ENCODE measurements at regions of chr19 and their contacts with region 1.

Region 1: DNA sequence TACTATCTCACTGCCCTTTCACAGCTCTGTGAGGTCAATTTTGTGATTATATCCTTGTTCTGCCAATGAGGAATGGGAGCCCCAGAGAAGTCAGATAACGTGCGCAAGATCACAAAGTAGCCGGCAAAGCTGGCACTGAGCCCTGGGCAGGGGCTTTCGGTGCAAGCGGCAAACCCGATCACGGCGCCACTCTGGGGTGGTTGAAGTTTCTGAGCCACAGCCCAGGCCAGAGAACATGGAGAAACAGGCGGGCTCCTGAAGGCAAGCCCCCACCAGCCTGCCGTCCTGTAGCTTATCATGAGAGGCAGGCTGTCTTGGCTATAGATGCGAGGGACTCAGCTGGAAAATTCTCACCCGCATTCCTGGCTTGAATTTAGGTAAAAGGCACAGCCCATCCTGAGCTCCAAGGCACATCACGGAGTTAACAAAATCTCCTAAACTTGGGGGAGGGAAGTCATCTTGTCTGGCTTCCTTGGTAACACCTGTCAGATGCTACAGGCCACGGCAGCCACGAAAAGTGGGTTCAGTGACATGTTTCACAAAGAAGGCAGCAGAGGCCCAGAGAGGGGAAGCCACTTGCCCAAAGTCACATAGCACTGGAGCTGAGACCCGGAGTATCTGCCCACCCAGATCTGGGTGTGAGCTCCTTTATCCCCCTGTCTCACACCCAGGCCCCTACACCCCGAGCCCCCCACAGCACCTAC is 12.5 kb downstream of the TNNT1 start:
- DNase-seq: no peak
- ATAC-seq: no peak
- H3K4me3 ChIP-seq: no peak overlapping the region
- H3K27ac ChIP-seq: no peak overlapping the region
- H3K4me1 ChIP-seq: peaks cover 6% of the 10 kb centered on the region
- H3K27me3 ChIP-seq: peaks cover 0 to 17% of the 10 kb centered on the region in 2 donors
- CTCF ChIP-seq: no peak
- POLR2A ChIP-seq: no peak

Region 2: DNA sequence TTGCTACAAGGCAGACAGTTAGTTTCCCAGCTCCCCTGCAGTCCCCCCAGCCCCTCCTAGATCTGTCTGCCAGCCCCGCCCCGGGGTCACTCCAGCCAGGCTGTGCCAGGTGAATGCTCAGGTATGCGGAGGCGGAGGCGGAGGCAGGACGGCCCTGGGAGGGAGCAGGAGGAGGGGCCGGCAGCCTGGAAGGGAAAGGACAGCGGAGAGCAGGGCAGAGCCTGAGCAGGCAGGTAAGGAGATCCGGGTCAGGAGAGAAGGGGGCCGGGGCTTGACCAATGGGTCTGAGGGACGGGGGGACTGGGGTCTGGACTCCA is 60.9 kb before region 1 on chr19 and contains the start of gene EPS8L1:
- intact Hi-C with region 1: no loop called
- DNase-seq: peak; percentile 64 to 80 (median 78)
- ATAC-seq: peak; percentile 87
- H3K4me3 ChIP-seq: no peak within 1 kb of the TSS
- H3K27ac ChIP-seq: peak within 1 kb of the TSS; percentile 57 to 74 (median 70)
- H3K4me1 ChIP-seq: peaks cover 22% of the 10 kb centered on the region
- H3K27me3 ChIP-seq: peaks cover 0 to 5% of the 10 kb centered on the region in 2 donors
- CTCF ChIP-seq: no peak
- POLR2A ChIP-seq: peak; percentile 15 to 75 (median 72)
- total RNA-seq, gene EPS8L1: 22.1 to 23.3 TPM

Region 3: DNA sequence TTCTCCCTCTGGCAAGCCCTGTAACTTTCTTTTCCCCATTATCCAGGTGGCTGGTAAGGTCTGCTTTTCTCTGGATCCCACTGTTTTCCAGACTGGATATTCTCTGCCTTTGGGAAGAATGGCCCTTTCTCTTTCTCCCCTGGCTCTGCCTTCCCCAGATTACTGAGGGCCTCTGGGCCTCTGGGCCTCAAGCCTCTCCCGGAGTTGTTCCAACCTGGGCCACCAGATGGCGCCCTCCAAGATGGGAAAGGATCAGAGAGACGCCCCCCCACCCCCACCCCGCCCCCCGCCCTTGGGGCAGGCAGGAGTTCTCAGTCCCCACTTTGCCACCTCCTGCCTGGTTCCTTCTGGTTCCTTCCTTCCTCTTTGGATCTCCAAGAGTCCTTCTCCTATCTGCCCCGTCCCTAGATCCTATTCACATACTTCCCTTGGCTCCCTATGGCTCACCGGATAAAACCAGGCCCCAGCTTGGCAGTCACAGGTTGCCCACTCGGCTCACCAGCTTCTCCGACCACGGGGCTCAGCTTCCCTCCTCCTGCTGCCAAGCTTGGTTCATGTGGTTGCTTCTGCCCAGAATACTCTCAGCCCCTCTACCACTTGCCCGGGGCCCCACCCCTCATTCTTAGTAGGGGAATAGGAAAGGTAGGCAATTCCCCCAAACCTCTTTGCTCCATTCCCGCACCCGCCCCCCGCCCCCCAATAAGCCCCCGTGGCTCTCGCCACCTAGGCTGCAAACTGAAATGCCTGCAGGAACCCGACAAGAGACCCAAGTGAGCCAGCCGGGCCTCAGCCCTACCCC is 47.8 kb before region 1 on chr19:
- intact Hi-C with region 1: no loop called
- DNase-seq: peak; percentile 69 to 82 (median 74)
- ATAC-seq: peak; percentile 51
- H3K4me3 ChIP-seq: no peak overlapping the region
- H3K27ac ChIP-seq: peak overlapping the region in 1 of 4 donors; percentile 29
- H3K4me1 ChIP-seq: peaks cover 23% of the 10 kb centered on the region
- H3K27me3 ChIP-seq: no peaks in the 10 kb centered on the region
- CTCF ChIP-seq: peak; percentile 43 to 80 (median 48)
- POLR2A ChIP-seq: no peak

Region 4: DNA sequence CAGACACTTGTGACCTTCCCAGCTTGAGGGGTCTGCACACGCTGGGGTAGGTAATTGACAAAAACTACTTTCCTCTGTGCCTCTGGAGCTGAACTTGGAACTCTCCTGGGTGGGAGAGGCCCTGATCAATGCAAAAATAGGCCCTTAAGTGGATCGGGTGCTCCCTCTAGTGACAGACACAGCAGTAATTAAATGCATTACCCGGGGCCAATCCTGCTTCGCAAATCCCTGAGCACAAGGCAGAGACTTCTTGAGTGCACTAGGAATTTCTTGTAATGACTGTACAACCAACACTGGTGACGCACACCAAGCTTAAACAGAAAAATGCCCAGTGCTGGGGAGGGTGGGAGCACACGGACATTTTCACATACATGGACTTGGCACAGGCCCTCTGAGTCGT is 281.6 kb after region 1 on chr19:
- intact Hi-C with region 1: loop called (anchors 5 kb)
- DNase-seq: peak; percentile 59 to 75 (median 67)
- ATAC-seq: peak; percentile 82
- H3K4me3 ChIP-seq: no peak overlapping the region
- H3K27ac ChIP-seq: no peak overlapping the region
- H3K4me1 ChIP-seq: no peaks in the 10 kb centered on the region
- H3K27me3 ChIP-seq: no peaks in the 10 kb centered on the region
- CTCF ChIP-seq: peak; percentile 42 to 82 (median 76)
- POLR2A ChIP-seq: no peak

Measured in body of pancreas (tissue), 4 donors.